ENCODE measurements at regions of chr1 and their contacts with region 1.

Region 1: DNA sequence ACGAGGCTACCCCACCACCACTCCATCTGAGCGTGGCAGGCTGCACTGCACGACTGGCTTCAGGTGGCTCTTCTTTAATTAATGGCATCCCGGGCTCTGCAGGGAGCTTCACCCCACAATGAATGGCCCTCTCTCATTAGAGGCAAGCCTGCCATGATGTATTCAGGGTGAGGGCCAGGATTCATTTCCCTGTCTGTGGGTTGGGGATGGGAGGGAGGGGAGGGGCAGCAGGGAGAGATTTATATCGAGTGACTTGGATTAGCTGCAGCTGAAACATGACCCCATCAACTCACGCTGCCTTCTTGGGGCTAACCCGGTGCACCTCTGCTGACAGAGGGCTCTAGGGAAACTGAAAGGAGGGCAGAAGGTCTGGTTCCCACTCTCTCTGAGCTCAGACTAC is 54.2 kb downstream of the ERI3 start:
- H3K4me3 ChIP-seq: no peak overlapping the region
- H3K27ac ChIP-seq: no peak overlapping the region
- H3K4me1 ChIP-seq: no peaks in the 10 kb centered on the region
- CTCF ChIP-seq: no peak

Region 2: GRCh38 chr1:44318097-44319088 is 17.5 kb after region 1 on chr1:
- CTCF ChIA-PET with region 1: interaction called, 19 read pairs
- POLR2A ChIA-PET with region 1: no interaction called
- H3K4me3 ChIP-seq: no peak overlapping the region
- H3K27ac ChIP-seq: no peak overlapping the region
- H3K4me1 ChIP-seq: no peaks in the 10 kb centered on the region
- CTCF ChIP-seq: peak; percentile 56